Heart left ventricle (tissue), 16 donors: ENCODE measurements at regions of chr7 and their contacts with region 1.

Region 1: GRCh38 chr7:18345641-18346234 is 149.8 kb upstream of the HDAC9 start:
- DNase-seq: no peak
- ATAC-seq: peak in 1 of 4 donors; percentile 49
- H3K4me3 ChIP-seq: no peak overlapping the region
- H3K27ac ChIP-seq: no peak overlapping the region
- H3K4me1 ChIP-seq: peaks cover 0 to 2% (median 0%) of the 10 kb centered on the region in 12 donors
- H3K27me3 ChIP-seq: no peaks in the 10 kb centered on the region
- CTCF ChIP-seq: peak; percentile 66 to 85 (median 76)
- POLR2A ChIP-seq: no peak

Region 2: DNA sequence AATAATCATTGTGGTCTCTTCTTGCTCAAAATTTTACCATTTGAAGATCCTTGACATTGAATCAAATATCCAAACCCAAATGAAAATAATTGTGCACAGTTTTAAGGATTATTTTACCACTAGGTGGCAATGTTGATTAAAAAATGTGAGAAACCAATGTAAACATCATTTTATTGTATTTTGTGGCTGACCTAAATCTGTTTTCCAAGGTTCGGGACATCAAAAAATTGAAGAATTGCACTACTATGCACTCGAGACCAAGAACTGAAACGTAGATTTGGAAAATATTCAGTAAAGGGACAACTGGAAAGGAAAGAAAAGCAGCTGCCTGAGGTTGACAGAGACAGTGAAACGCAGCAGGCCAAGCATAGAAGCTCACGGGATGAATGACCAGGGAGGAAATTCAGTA is 664.8 kb before region 1 on chr7:
- intact Hi-C with region 1: loop called in 4 of 10 experiments (anchors 5 to 10 kb)
- DNase-seq: no peak
- ATAC-seq: peak in 1 of 4 donors; percentile 20
- H3K4me3 ChIP-seq: no peak overlapping the region
- H3K27ac ChIP-seq: peak overlapping the region in 1 of 12 donors; percentile 75
- H3K4me1 ChIP-seq: peaks cover 0 to 45% (median 16%) of the 10 kb centered on the region in 12 donors
- H3K27me3 ChIP-seq: no peaks in the 10 kb centered on the region
- CTCF ChIP-seq: peak; percentile 33 to 72 (median 62)
- POLR2A ChIP-seq: no peak

Region 3: DNA sequence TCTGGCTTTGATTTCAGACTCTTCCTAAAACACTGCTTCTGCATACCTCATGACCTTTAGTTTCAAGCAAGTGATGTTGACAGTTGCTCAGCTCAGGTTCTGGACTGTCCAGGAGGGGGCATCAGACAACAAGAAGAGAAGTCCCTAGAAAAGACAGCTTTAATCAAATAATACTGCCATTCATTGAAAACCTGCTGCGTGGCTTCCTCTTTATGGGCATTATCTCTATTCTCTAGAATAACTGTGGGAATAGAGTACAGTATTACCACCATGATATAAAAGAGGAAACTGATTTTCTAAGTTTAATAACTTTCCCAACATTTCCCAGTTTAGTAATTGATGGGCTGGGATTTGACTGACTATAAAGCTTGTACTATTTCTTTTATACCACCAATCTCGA is 575.8 kb before region 1 on chr7:
- intact Hi-C with region 1: loop called in 9 of 10 experiments (anchors 5 to 10 kb)
- DNase-seq: peak; percentile 28 to 55 (median 44)
- ATAC-seq: peak in 3 of 4 donors; percentile 57 to 66 (median 58)
- H3K4me3 ChIP-seq: no peak overlapping the region
- H3K27ac ChIP-seq: peak overlapping the region in 1 of 12 donors; percentile 46
- H3K4me1 ChIP-seq: peaks cover 0 to 39% (median 9%) of the 10 kb centered on the region in 12 donors
- H3K27me3 ChIP-seq: no peaks in the 10 kb centered on the region
- CTCF ChIP-seq: peak; percentile 46 to 74 (median 68)
- POLR2A ChIP-seq: no peak

Region 4: GRCh38 chr7:17971411-17971810 is 374.3 kb before region 1 on chr7:
- intact Hi-C with region 1: loop called in 7 of 10 experiments (anchors 5 to 10 kb)
- DNase-seq: no peak
- ATAC-seq: no peak
- H3K4me3 ChIP-seq: no peak overlapping the region
- H3K27ac ChIP-seq: no peak overlapping the region
- H3K4me1 ChIP-seq: no peaks in the 10 kb centered on the region
- H3K27me3 ChIP-seq: no peaks in the 10 kb centered on the region
- CTCF ChIP-seq: peak in 8 of 12 donors; percentile 9 to 48 (median 35)
- POLR2A ChIP-seq: no peak

Region 5: DNA sequence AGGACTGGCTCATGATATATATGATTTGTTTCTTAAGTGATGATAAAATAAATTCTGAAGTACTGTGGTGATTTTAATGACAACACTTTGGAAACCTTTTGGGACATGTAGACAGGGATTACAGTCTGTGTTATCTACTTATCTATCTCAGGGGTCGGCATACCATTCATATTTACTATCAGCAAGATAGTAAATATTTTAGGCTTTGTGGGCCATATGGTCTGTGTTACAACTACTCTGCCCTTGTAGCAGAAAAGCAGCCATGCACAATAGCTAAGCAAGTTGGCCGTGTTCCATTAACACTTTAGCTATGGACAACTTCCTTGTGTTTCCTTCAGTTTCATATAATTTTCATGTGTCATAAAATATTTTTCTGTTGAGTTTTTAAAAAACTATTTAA is 220.3 kb before region 1 on chr7:
- intact Hi-C with region 1: no loop called
- DNase-seq: no peak
- ATAC-seq: peak in 1 of 4 donors; percentile 31
- H3K4me3 ChIP-seq: no peak overlapping the region
- H3K27ac ChIP-seq: no peak overlapping the region
- H3K4me1 ChIP-seq: peaks cover 0 to 18% (median 0%) of the 10 kb centered on the region in 12 donors
- H3K27me3 ChIP-seq: no peaks in the 10 kb centered on the region
- CTCF ChIP-seq: no peak
- POLR2A ChIP-seq: no peak

Region 6: DNA sequence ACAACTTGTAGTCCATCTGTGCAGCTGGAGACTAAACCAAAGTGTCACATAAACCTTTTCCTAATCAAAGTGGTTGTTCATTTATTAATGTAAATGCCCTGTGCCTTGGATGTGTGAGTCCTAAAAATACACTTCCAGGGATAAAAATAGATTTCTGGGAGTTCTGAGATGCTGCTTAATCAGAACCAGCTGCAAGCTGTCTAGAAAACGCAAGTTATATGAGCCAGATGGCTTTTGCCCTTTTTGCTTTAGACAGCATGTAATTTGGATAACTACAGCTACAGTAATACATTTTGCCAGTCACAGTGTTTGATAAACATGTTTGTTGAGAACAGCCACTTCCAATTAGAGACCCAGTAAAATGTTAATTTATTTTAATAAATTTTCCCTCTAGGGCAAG is 133.0 kb before region 1 on chr7:
- intact Hi-C with region 1: loop called in 1 of 10 experiments (anchors 5 kb)
- DNase-seq: peak in 1 of 5 donors; percentile 16
- ATAC-seq: peak; percentile 51 to 87 (median 78)
- H3K4me3 ChIP-seq: no peak overlapping the region
- H3K27ac ChIP-seq: peak overlapping the region in 9 of 12 donors; percentile 6 to 61 (median 53)
- H3K4me1 ChIP-seq: peaks cover 0 to 26% (median 11%) of the 10 kb centered on the region in 12 donors
- H3K27me3 ChIP-seq: no peaks in the 10 kb centered on the region
- CTCF ChIP-seq: no peak
- POLR2A ChIP-seq: no peak

Region 7: DNA sequence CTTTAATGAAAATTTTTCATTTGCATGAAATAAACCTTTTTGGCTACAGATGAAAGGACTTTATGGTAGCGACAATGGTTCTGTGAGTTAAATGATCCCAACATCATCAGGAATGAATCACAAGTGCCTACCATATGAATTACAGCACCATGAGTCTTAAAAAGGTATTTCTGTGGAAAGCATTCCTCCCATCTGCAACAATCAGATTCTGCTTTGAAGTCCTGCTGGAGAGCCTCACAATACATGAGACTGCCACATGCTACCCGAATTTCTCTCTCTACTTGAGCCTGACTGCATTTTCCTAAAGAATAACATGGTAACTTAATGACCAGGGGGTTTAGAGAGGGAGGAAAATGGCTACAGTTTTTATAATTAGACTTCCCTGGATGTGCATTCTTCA is 581.4 kb after region 1 on chr7:
- intact Hi-C with region 1: no loop called
- DNase-seq: no peak
- ATAC-seq: no peak
- H3K4me3 ChIP-seq: no peak overlapping the region
- H3K27ac ChIP-seq: no peak overlapping the region
- H3K4me1 ChIP-seq: no peaks in the 10 kb centered on the region
- H3K27me3 ChIP-seq: no peaks in the 10 kb centered on the region
- CTCF ChIP-seq: no peak
- POLR2A ChIP-seq: no peak